Dorsolateral prefrontal cortex (tissue), 120 donors: ENCODE measurements at regions of chr22 and their contacts with region 1.

Region 1: GRCh38 chr22:46116491-46116958 is 33.8 kb upstream of the PPARA start:
- DNase-seq: peak; percentile 90 to 94 (median 92)
- H3K4me3 ChIP-seq: peak overlapping the region in 13 of 59 donors; percentile 5 to 41 (median 19)
- H3K27ac ChIP-seq: peak overlapping the region in 58 of 59 donors; percentile 4 to 98 (median 87)
- H3K27me3 ChIP-seq: no peaks in the 10 kb centered on the region
- CTCF ChIP-seq: peak in 55 of 56 donors; percentile 52 to 95 (median 81)

Region 2: DNA sequence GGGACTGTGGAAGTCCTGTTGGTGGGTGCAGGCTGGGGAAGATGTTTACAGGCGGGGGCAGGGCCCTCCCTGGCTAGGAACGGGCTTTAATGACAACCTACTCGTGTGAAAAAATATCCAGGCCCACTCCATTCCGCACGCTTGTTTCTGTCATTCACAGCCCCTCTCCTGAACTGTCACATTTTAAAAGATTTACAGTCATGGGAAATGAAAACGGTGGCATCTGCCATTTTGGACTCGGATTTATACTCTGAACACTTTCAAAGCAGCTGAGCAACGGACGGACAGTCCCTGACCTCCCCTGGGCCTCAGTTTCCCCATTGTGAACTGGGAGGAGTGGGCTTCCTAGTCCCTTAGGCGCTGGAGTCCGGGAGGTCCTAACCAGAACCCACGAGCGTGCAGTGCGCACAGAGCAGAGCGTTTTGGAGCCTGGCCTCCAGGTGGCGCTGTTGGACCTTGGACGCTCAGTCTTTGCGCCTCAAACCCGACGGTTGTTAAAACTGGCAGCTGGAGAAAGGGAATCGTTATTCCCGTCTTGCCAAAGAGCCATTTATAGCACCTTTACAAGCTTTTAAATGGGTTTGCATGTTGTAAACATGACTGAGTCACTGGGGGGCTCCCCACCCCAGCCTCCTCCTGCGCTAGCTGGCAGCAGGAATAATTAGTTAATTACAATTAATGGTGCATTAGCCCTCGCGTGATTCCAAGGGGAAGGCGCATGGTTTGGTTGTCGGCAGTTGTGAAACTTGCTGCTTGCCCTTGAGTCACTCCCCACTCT is 538.6 kb before region 1 on chr22:
- intact Hi-C with region 1: loop called in 1 of 2 experiments (anchors 10 kb)
- DNase-seq: peak; percentile 73 to 88 (median 79)
- H3K4me3 ChIP-seq: peak overlapping the region in 1 of 59 donors; percentile 12
- H3K27ac ChIP-seq: no peak overlapping the region
- H3K27me3 ChIP-seq: peaks cover 0 to 17% (median 0%) of the 10 kb centered on the region in 45 donors
- CTCF ChIP-seq: peak; percentile 47 to 97 (median 94)

Region 3: DNA sequence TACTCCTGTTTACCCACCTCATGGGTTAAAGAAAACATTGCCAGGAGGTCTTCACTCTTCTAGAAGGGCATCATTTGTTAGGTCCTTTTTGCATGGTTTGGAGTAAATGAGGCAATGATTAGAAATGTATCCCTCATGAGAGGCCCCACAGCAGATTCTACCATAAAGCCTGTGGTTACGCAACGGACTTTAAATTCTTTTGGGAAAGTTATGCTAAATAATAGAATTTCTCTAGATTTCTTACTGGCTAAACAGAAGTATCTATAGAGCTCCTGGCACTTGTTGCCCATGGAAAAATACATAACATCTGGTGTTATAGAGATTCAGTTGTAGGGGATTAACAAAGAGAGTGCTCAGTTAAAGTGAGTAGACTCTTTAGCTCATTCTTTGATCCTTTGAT is 459.9 kb before region 1 on chr22:
- intact Hi-C with region 1: loop called in 1 of 2 experiments (anchors 10 kb)
- DNase-seq: no peak
- H3K4me3 ChIP-seq: no peak overlapping the region
- H3K27ac ChIP-seq: no peak overlapping the region
- H3K27me3 ChIP-seq: peaks cover 0 to 4% (median 0%) of the 10 kb centered on the region in 45 donors
- CTCF ChIP-seq: no peak

Region 4: DNA sequence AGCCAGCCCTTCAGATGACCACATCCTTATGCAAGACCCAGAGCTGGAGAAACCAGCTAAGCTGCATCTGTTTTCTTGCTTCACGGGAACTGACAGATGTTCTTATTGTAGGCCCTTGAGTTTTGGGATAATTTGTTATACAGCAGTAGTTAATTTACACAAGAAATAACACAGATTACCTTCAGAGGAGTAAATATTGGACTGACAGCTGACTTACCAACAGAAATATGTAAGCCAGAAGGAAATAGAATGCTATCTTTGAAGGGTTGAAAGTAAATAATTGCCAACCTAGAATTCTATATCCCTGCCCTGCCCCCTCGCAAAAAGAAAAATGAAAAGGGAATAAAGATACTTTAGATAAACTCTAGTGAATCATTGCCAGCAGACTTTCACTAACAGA is 263.7 kb before region 1 on chr22:
- intact Hi-C with region 1: no loop called
- DNase-seq: no peak
- H3K4me3 ChIP-seq: no peak overlapping the region
- H3K27ac ChIP-seq: no peak overlapping the region
- H3K27me3 ChIP-seq: no peaks in the 10 kb centered on the region
- CTCF ChIP-seq: no peak

Region 5: GRCh38 chr22:45889305-45890093 is 227.0 kb before region 1 on chr22:
- intact Hi-C with region 1: loop called in 1 of 2 experiments (anchors 10 kb)
- DNase-seq: peak in 3 of 10 donors; percentile 31 to 48 (median 43)
- H3K4me3 ChIP-seq: peak overlapping the region in 42 of 59 donors; percentile 2 to 58 (median 32)
- H3K27ac ChIP-seq: no peak overlapping the region
- H3K27me3 ChIP-seq: peaks cover 0 to 32% (median 9%) of the 10 kb centered on the region in 45 donors
- CTCF ChIP-seq: no peak

Region 6: GRCh38 chr22:46006379-46007002 is 110.0 kb before region 1 on chr22:
- intact Hi-C with region 1: loop called (anchors 1 to 2 kb)
- DNase-seq: peak; percentile 90 to 95 (median 92)
- H3K4me3 ChIP-seq: peak overlapping the region in 38 of 59 donors; percentile 2 to 47 (median 24)
- H3K27ac ChIP-seq: peak overlapping the region in 58 of 59 donors; percentile 37 to 94 (median 83)
- H3K27me3 ChIP-seq: no peaks in the 10 kb centered on the region
- CTCF ChIP-seq: peak; percentile 90 to 100 (median 99)